GM13977 (cell line): ENCODE measurements at regions of chr18 and their contacts with region 1.

Region 1: DNA sequence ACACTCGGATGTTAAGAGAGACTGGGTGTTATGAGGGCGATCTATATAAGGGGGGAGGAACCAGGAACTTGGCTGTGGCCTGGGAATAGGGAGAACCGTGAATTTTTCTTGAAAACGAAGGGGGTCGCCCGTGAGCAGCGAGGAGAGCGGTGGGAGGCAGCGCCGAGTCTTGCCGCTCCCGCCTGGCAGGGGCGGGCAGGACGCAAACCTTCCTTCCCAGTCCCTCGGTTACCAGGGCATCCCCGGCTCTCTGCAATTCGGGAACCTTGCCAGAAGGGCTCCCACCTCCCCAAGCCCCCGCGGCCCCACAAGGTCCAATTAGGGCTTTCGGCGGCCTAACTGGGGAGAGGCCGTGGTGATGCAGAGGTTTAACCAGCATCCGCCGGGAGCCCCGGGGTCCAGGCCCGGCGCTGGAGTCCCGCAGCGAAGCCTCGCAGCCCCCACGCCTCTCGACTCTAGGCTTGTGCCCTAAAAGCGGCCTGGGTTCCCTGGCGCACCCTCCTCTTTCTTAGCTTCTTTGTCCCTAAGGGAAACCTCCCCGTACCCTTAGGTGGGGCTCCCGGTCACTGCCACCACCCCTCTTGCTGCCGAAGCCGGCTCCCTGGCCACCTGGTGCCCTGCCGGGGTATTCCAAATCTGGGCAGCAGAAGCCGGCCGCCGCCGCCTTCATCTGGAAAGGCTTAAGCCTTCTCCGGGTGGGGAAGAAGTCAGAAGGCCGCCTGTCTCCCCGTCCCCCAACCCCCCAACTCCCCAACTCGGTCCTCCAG is 680 bp upstream of the FHOD3 start:
- DNase-seq: peak; percentile 49
- CTCF ChIP-seq: peak; percentile 43

Region 2: GRCh38 chr18:35386600-35387351 is 910.1 kb before region 1 on chr18:
- in situ Hi-C with region 1: loop called (anchors 25 kb)
- DNase-seq: peak; percentile 73
- CTCF ChIP-seq: peak; percentile 90

Region 3: GRCh38 chr18:36015629-36016028 is 281.2 kb before region 1 on chr18:
- in situ Hi-C with region 1: loop called (anchors 25 kb)
- DNase-seq: peak; percentile 53
- CTCF ChIP-seq: no peak